Mammary epithelial cell (primary cell): ENCODE measurements at regions of chr20 and their contacts with region 1.

Region 1: GRCh38 chr20:51128198-51128597 is 105.3 kb upstream of the KCNG1 start:
- DNase-seq: peak; percentile 84
- H3K4me3 ChIP-seq: no peak overlapping the region
- H3K27ac ChIP-seq: no peak overlapping the region
- H3K4me1 ChIP-seq: no peaks in the 10 kb centered on the region
- H3K27me3 ChIP-seq: no peaks in the 10 kb centered on the region
- CTCF ChIP-seq: no peak

Region 2: DNA sequence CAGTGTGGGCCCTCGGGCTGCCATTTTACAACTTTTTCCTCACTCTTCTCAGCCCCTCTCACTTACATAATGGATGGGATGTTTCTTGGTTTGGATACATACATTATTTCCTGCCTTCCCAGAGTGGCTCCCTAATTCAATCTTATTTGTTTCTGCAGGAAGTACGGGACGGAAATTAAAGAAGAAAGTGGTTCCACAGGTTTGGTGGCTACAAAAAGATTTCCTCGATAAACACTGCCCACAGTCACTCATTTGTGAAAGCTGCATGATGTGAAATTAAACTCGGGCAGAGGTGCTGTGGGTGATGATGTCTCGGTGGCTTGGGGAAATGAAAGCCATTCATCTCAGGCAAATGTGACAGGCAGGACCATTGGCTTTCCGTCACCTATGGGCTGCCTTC is 14.2 kb after region 1 on chr20:
- CTCF ChIA-PET with region 1: no interaction called
- dilution Hi-C with region 1: no loop called
- in situ Hi-C with region 1: no loop called
- intact Hi-C with region 1: no loop called
- DNase-seq: no peak
- H3K4me3 ChIP-seq: no peak overlapping the region
- H3K27ac ChIP-seq: no peak overlapping the region
- H3K4me1 ChIP-seq: no peaks in the 10 kb centered on the region
- H3K27me3 ChIP-seq: peaks cover 6% of the 10 kb centered on the region
- CTCF ChIP-seq: no peak

Region 3: GRCh38 chr20:51206032-51206662 is 77.9 kb after region 1 on chr20:
- CTCF ChIA-PET with region 1: no interaction called
- dilution Hi-C with region 1: loop called (anchors 5 kb)
- in situ Hi-C with region 1: no loop called
- intact Hi-C with region 1: no loop called
- DNase-seq: no peak
- H3K4me3 ChIP-seq: no peak overlapping the region
- H3K27ac ChIP-seq: no peak overlapping the region
- H3K4me1 ChIP-seq: no peaks in the 10 kb centered on the region
- H3K27me3 ChIP-seq: peaks cover 4% of the 10 kb centered on the region
- CTCF ChIP-seq: no peak